ENCODE measurements at regions of chr14 and their contacts with region 1.

Region 1: GRCh38 chr14:61252369-61253063 is 28.6 kb downstream of the TMEM30B start:
- DNase-seq: peak; percentile 68 to 79
- ATAC-seq: peak; percentile 89 to 94 (median 92)
- H3K4me3 ChIP-seq: peak overlapping the region; percentile 19
- H3K27ac ChIP-seq: peak overlapping the region; percentile 72
- H3K4me1 ChIP-seq: peaks cover 41% of the 10 kb centered on the region
- H3K27me3 ChIP-seq: no peaks in the 10 kb centered on the region
- CTCF ChIP-seq: peak; percentile 88

Region 2: GRCh38 chr14:60628191-60628590 is 624.3 kb before region 1 on chr14:
- intact Hi-C with region 1: loop called (anchors 2 to 5 kb)
- DNase-seq: no peak
- ATAC-seq: no peak
- H3K4me3 ChIP-seq: no peak overlapping the region
- H3K27ac ChIP-seq: peak overlapping the region; percentile 54
- H3K4me1 ChIP-seq: peaks cover 35% of the 10 kb centered on the region
- H3K27me3 ChIP-seq: no peaks in the 10 kb centered on the region
- CTCF ChIP-seq: no peak

Region 3: DNA sequence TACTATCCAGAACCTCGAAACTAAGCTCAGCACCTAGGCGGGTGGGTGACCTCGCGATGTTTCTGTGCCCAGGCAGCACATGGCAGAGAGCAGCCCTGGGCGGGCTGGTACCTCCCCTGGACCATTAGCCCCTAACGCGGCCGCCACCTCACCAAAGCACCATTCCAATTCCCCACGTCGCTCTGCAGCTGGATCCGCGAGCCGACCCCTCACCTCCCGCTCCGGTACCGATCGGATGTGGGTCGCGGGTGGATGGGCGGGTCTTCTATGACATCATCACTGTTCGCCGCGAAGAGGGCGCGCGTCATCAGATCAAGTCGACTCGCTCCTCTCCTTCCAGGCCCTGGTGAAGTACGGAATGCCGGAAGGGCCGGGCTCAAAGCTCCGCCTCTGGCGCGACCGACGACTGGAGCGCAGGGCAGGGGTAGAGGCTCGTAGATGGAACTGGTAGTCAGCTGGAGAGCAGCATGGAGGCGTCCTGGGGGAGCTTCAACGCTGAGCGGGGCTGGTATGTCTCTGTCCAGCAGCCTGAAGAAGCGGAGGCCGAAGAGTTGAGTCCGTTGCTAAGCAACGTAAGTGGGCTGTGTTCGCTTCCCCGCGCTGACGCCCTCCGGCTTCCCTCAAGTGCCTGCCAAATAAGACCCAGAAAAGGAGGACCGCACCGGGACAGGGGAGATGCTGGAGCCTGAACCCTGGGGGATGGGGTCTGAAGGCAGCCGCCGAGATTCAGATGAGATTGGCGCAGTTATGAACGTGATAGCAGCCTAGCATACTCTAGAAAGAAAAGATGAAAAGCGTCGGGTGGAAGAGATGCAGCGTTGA is 271.5 kb before region 1 on chr14 and contains the starts of genes SLC38A6 and TRMT5:
- intact Hi-C with region 1: loop called in 1 of 2 experiments (anchors 5 kb)
- DNase-seq: peak; percentile 94 to 97
- ATAC-seq: peak; percentile 95 to 97 (median 96)
- H3K4me3 ChIP-seq: peak within 1 kb of the TSS; percentile 94
- H3K27ac ChIP-seq: peak within 1 kb of the TSS; percentile 98
- H3K4me1 ChIP-seq: peaks cover 43% of the 10 kb centered on the region
- H3K27me3 ChIP-seq: no peaks in the 10 kb centered on the region
- CTCF ChIP-seq: no peak
- total RNA-seq, gene SLC38A6: 4.9 to 11.9 (median 6.6) TPM
- total RNA-seq, gene TRMT5: 9.7 to 26.0 (median 12.8) TPM

Region 4: DNA sequence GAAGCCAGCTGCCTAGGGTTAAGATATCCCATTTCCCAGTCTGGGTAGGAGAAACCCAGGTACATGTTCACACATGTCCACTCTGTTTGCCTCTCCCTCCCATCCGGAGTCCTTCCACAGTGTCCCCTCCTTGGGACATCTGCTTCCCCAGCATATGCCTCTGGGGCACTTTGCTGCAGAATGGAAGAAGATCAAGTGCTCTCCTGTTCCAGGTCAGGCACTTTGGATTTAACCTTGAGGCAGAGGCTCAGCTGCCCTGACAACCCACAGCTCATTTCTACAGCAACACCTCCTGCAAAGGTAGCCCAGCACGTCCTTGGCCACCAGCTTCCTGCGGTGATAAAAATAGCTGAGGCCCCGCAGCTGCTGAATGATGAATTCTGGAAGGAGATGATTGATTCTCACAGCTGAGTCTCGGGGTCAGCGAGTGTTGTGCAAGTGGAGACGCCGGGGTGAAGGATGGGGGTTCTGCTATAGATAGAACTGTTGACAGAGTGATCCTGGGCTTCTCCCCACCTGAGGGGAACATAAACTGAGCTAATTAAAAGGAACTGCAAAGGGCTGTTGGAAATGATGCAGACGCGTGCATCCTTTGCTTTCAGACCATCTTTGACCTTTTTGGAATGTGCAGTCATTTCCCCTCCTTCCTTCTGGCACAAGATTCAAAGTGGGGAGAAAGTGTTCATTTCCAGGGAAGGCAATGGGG is 126.5 kb before region 1 on chr14:
- intact Hi-C with region 1: loop called in 1 of 2 experiments (anchors 10 kb)
- DNase-seq: peak; percentile 75 to 89
- ATAC-seq: peak; percentile 71 to 77 (median 74)
- H3K4me3 ChIP-seq: peak overlapping the region; percentile 37
- H3K27ac ChIP-seq: peak overlapping the region; percentile 97
- H3K4me1 ChIP-seq: peaks cover 57% of the 10 kb centered on the region
- H3K27me3 ChIP-seq: no peaks in the 10 kb centered on the region
- CTCF ChIP-seq: no peak

Region 5: GRCh38 chr14:61213191-61213621 is 39.3 kb before region 1 on chr14:
- intact Hi-C with region 1: loop called (anchors 5 kb)
- DNase-seq: no peak
- ATAC-seq: peak in 2 of 4 donors; percentile 50 to 62
- H3K4me3 ChIP-seq: no peak overlapping the region
- H3K27ac ChIP-seq: peak overlapping the region; percentile 75
- H3K4me1 ChIP-seq: peaks cover 7% of the 10 kb centered on the region
- H3K27me3 ChIP-seq: no peaks in the 10 kb centered on the region
- CTCF ChIP-seq: no peak